Heart left ventricle (tissue), 16 donors: ENCODE measurements at regions of chr14 and their contacts with region 1.

Region 1: DNA sequence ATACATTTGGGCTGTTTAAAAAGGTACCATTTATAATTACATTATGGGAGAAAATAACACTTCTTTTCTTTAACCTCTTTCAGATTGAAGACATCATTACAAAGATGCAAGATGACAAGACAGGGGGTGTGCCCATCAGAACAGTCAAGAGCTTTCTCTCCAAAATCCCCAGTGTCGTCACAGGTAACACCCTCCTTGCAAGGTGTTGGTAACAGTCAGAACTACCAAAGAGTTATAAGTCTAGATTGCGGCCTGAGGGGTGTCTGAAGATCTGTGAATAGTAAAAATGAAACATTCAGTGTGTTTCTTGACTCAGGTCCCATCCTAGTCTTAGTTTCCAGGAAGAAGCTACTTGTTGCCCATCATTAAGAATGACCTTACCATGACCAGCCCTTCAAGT is 419.8 kb downstream of the RGS6 start:
- DNase-seq: no peak
- ATAC-seq: no peak
- H3K4me3 ChIP-seq: no peak overlapping the region
- H3K27ac ChIP-seq: no peak overlapping the region
- H3K4me1 ChIP-seq: no peaks in the 10 kb centered on the region
- H3K27me3 ChIP-seq: no peaks in the 10 kb centered on the region
- CTCF ChIP-seq: no peak
- POLR2A ChIP-seq: no peak

Region 2: GRCh38 chr14:72222046-72222445 is 130.0 kb before region 1 on chr14:
- intact Hi-C with region 1: no loop called
- DNase-seq: no peak
- ATAC-seq: no peak
- H3K4me3 ChIP-seq: no peak overlapping the region
- H3K27ac ChIP-seq: no peak overlapping the region
- H3K4me1 ChIP-seq: no peaks in the 10 kb centered on the region
- H3K27me3 ChIP-seq: no peaks in the 10 kb centered on the region
- CTCF ChIP-seq: no peak
- POLR2A ChIP-seq: no peak

Region 3: DNA sequence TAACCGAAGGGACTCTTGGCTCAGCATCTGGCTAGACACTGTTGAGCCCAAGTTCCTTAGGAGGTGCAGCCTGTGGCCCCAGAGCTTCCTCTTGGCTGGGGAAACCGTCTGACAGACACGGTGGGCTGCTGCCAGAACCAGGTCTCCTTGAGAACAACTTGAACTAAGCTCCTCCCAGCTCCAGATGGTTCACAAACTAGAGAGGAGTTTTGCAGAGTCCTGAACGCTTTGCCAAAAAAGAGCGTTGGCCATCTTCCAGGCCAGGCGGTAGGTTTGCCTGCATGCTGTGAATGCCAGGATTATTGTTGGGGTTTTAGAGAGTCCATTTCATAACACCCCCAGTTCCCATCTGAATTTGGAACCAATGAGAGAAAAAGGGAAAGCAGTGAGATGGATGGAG is 20.0 kb before region 1 on chr14:
- intact Hi-C with region 1: loop called in 1 of 10 experiments (anchors 2 kb)
- DNase-seq: peak in 2 of 5 donors; percentile 25 to 39
- ATAC-seq: peak in 3 of 4 donors; percentile 24 to 43 (median 38)
- H3K4me3 ChIP-seq: no peak overlapping the region
- H3K27ac ChIP-seq: no peak overlapping the region
- H3K4me1 ChIP-seq: peaks cover 0 to 13% (median 9%) of the 10 kb centered on the region in 12 donors
- H3K27me3 ChIP-seq: no peaks in the 10 kb centered on the region
- CTCF ChIP-seq: no peak
- POLR2A ChIP-seq: no peak

Region 4: GRCh38 chr14:72387726-72388125 is 35.7 kb after region 1 on chr14:
- intact Hi-C with region 1: no loop called
- DNase-seq: no peak
- ATAC-seq: no peak
- H3K4me3 ChIP-seq: no peak overlapping the region
- H3K27ac ChIP-seq: no peak overlapping the region
- H3K4me1 ChIP-seq: peaks cover 0 to 3% (median 0%) of the 10 kb centered on the region in 12 donors
- H3K27me3 ChIP-seq: no peaks in the 10 kb centered on the region
- CTCF ChIP-seq: no peak
- POLR2A ChIP-seq: no peak